ENCODE measurements at regions of chr17 and their contacts with region 1.

Region 1: GRCh38 chr17:80454557-80455335 is 21.7 kb downstream of the NPTX1 start:
- DNase-seq: peak; percentile 98

Region 2: DNA sequence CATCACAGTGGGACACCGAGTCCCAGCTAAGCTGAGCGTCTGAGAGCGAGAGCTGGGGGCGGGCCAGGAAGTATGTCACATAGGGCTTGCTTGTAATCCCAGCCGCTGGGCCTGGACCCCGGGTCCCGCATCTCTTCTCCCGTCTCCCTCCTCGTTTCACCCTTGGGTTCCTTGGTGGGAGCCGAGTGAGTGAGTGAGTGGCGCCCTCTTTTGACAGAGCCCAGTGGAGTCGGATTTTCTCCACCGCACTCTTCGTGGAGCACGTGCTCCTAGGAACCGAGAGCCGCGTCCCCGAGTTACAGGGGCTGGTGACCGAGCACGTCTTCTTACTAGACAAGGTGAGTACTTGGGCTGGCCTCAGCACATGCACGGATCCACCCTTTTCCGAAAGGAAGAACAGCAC is 90.5 kb before region 1 on chr17:
- CTCF ChIA-PET with region 1: no interaction called
- POLR2A ChIA-PET with region 1: no interaction called
- DNase-seq: peak; percentile 51

Region 3: GRCh38 chr17:80406146-80406545 is 48.6 kb before region 1 on chr17:
- CTCF ChIA-PET with region 1: no interaction called
- POLR2A ChIA-PET with region 1: no interaction called
- DNase-seq: no peak

Region 4: GRCh38 chr17:80424878-80425697 is 29.7 kb before region 1 on chr17:
- CTCF ChIA-PET with region 1: interaction called, 5 read pairs
- POLR2A ChIA-PET with region 1: interaction called, 11 read pairs
- DNase-seq: no peak

Region 5: GRCh38 chr17:80441133-80441578 is 13.6 kb before region 1 on chr17:
- CTCF ChIA-PET with region 1: no interaction called
- POLR2A ChIA-PET with region 1: interaction called, 56 read pairs
- DNase-seq: peak; percentile 90

Region 6: DNA sequence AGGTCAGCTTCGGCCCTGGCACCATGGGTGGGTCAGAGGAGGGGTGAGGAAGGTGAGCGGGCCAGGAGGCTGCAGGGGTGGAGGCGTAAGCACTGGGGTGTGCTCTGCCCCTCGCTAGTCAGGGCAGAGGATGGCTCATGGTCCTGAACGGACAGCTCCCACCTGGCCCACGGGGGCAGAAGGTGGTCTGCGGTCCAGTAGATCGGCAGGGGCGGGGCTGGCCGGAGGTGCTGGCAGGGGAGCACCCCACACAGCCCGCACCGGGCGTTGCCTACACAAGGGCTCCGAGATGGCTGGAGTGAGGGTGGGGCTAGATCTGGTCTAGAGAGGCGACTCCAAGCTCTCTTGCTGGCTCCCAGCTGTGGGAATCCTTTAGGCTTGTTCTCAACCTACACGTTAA is 13.5 kb after region 1 on chr17:
- CTCF ChIA-PET with region 1: interaction called, 3 read pairs
- POLR2A ChIA-PET with region 1: interaction called, 104 read pairs
- DNase-seq: no peak

Region 7: DNA sequence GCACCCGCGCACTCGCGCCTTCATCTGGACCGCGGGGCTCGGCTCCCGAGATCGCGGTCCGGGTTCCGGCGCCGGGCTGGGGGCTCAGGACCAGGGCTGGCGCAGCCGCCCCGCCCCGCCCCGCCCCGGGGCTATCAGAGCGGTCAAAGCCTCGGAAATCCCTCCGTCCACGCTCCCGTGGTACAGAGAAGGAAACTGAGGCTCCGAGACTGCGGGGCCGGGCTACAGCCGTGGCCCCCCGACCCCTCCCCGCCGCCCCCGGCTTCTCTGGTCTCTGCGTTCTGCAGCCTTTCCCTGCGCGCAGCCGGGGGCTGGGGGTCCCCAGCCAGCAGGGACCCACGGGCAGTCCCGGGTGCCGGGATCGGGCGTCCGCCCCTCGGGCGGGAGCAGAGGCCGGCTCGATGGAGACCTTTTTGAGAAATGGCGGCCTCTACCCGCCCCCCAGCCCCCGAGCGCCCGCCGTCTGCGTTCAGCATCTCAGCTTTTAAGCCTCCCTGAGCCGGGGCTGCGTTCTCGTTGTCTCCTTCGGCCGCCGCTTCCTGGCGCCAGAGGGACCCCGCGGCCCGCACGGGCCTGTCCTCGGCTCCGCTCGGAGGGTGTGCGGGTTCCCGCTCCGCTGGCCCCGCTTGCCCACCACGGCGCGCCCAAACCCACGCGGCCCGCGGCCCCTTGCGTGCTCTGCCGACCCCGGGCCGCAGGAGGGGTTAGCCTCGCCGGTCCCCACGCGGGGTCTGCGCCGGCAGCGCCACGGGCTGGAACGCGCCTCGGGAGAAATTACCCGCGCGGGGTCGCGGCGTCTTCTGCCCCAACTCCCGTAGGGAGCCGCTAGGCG is 23.1 kb after region 1 on chr17:
- CTCF ChIA-PET with region 1: no interaction called
- POLR2A ChIA-PET with region 1: interaction called, 54 read pairs
- DNase-seq: peak; percentile 56

Region 8: DNA sequence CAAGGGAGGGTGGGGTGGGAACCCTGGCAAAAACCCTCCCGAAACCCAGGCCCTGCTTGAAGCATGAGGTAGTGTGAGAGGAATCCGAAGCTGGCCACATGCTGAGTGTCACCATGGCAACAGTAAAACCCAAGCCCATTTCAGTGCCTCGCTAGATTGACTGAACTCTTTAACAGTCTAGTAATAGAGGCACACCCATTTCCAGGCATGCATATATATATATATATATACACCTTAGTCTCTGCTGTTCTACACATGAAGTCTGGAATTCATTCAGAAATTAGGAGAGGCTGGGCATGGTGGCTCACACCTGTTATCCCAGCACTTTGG is 477.2 kb after region 1 on chr17:
- CTCF ChIA-PET with region 1: no interaction called
- POLR2A ChIA-PET with region 1: interaction called, 12 read pairs
- DNase-seq: peak; percentile 73